Naive thymus-derived CD4-positive, alpha-beta T cell (primary cell): ENCODE measurements at regions of chr19 and their contacts with region 1.

Region 1: DNA sequence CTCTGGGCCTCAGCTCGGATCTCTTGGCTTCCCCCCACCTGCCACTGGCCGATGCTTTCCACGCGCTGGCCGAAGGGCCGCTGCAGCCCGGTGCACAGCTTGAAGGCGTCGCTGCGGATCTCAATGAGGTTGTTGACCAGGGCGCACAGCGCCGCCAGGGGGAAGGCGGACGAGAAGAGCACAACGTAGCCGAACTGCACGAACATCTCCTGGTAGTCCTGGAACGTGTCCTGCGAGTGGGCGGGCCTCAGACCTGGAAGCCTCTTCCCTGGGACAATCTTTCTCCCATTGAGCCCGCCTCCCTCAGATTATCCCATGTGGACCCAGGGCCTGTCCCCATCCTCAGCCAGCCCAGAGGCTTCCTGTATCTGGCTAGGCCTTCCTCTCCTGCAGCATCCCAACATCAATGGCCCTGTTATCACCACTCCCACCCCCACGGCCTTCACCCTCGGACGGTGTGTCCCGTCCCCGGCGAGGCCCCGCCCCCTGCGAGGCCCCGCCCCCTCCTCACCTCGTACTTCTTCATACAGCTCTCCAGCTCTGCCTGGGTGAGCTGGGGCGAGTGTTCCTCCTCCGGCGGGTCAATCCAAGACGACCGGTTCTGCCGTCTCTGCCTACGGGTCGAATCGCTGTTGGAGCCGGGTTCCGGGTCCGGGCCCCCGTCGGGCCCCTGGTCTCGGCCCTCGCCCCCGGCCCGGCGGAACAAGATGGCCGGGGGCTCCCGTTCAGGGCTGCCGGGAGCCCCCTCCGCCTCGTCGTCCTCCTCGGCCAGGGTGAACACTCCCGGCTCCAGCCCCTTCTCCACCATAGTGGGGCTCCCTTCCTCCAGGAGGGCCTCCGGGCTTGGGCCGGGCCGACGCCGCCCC is 6.8 kb downstream of the ANO8 start:
- DNase-seq: peak in 8 of 9 donors; percentile 35 to 61 (median 50)
- ATAC-seq: peak; percentile 79
- H3K4me3 ChIP-seq: peak overlapping the region; percentile 71
- H3K4me3 Mint-ChIP-seq: peak overlapping the region; percentile 71 to 85 (median 81)
- H3K27ac ChIP-seq: peak overlapping the region; percentile 84
- H3K27ac Mint-ChIP-seq: peak overlapping the region in 7 of 9 donors; percentile 48 to 84 (median 76)
- H3K4me1 ChIP-seq: peaks cover 6 to 7% of the 10 kb centered on the region in 2 donors
- H3K4me1 Mint-ChIP-seq: peaks cover 7 to 28% (median 15%) of the 10 kb centered on the region in 7 donors
- H3K27me3 ChIP-seq: no peaks in the 10 kb centered on the region
- H3K27me3 Mint-ChIP-seq: peaks cover 0 to 12% (median 0%) of the 10 kb centered on the region in 5 donors

Region 2: GRCh38 chr19:17346109-17346671 is 18.3 kb after region 1 on chr19:
- CTCF ChIA-PET with region 1: interaction called, 5 read pairs
- POLR2A ChIA-PET with region 1: no interaction called
- intact Hi-C with region 1: loop called in 1 of 2 experiments (anchors 2 kb)
- DNase-seq: peak; percentile 46 to 85 (median 71)
- ATAC-seq: peak; percentile 98
- H3K4me3 ChIP-seq: no peak overlapping the region
- H3K4me3 Mint-ChIP-seq: no peak overlapping the region
- H3K27ac ChIP-seq: no peak overlapping the region
- H3K27ac Mint-ChIP-seq: peak overlapping the region in 2 of 9 donors; percentile 13 to 46
- H3K4me1 ChIP-seq: peaks cover 0 to 5% of the 10 kb centered on the region in 2 donors
- H3K4me1 Mint-ChIP-seq: peaks cover 0 to 15% (median 6%) of the 10 kb centered on the region in 7 donors
- H3K27me3 ChIP-seq: peaks cover 0 to 2% of the 10 kb centered on the region in 2 donors
- H3K27me3 Mint-ChIP-seq: peaks cover 4 to 19% (median 7%) of the 10 kb centered on the region in 5 donors